ENCODE measurements at regions of chr14 and their contacts with region 1.

Region 1: DNA sequence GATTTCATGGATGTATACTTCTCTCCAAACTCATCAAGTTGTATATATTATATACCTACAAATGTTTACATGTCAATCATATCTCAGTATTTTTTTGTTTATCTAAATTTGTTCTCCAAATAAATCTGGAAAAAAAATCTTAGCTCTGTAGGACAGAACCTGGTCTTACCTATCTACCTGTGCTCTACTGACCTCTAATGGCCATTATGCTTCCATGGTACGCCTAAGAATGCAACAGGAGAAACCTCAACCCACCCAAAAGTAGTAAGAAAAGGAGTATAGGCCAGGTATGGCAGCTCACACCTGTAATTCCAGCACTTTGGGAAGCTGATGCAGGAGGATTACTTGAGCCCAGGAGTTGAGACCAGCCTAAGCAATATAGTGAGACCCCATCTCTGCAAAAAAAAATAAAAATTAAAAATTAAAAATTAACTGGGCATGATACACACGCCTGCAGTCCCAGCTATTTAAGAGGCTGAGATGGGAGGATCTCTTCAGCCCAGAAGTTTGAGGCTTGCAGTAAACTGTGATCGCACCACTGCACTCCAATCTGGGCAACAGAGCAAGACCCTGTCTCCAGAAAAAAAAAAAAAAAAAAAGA is 8.7 kb downstream of the OR11H4 start:
- DNase-seq: no peak
- H3K4me3 ChIP-seq: no peak overlapping the region
- H3K27ac ChIP-seq: no peak overlapping the region
- H3K4me1 ChIP-seq: no peaks in the 10 kb centered on the region
- H3K27me3 ChIP-seq: no peaks in the 10 kb centered on the region
- CTCF ChIP-seq: no peak

Region 2: DNA sequence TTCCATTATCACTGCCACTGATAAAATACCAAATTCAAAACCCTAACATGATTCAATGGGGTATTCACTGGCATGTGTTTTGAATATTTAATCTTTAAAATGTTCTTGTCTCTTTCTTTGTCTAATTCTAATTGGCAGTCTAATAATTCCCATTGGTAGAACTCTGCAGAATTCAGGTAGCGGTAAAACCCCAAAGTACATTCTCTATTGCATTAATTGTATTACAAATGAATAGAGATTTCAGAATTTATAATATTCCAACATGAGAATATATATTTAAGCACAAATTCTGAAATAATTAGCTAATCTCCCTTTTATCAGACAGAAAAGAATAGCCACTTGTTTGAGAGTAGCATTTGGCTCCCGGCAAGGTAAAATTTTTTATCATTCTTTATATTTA is 109.2 kb before region 1 on chr14 and contains the start of gene OR4N5:
- intact Hi-C with region 1: loop called (anchors 5 kb)
- DNase-seq: no peak
- H3K4me3 ChIP-seq: no peak within 1 kb of the TSS
- H3K27ac ChIP-seq: no peak within 1 kb of the TSS
- H3K4me1 ChIP-seq: no peaks in the 10 kb centered on the region
- H3K27me3 ChIP-seq: no peaks in the 10 kb centered on the region
- CTCF ChIP-seq: no peak
- total RNA-seq, gene OR4N5: not detected

Measured in left ventricle myocardium inferior (tissue), 1 donor.